ENCODE measurements at regions of chr12 and their contacts with region 1.

Region 1: DNA sequence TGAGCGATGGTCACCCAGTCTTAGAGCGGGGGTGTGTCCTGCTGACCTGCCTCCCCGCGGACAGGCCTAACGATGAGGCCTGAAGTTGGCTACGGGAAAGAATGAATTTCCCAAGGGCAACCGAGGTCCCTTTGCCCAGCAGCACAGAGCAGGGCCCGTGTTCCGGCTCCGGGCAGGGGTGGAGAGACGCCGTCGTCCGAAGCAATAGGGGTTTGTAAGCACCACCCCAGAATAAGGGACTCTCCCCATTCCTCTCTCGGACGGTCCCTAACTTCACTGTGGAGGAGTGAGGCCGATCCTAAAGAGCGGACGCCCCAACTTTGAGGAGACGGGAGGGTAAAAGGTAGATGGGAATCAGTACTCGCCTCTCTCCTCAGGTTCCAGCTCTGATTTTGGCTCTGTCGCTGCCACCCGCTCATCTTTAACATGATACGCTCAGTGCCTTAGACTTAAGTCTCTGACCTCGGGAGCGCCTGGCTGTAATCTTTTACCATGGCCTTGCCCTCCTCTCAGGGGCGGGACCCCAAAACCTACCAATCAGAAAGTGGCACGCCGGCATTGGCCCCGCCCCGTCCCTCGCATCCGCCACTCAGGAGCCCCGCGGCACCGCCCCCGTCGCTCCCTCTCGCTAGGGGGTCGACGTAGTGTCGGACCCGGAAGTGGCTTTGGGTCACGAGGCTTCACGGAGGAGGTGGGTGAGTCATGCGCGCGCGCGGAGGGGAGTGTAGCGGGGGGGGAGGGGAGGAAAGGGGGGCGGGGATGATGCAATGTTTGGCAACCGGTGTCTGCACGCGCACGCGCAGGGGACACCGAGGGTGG is at the start of gene DDIT3:
- DNase-seq: peak; percentile 99
- H3K4me3 Mint-ChIP-seq: peak within 1 kb of the TSS; percentile 91
- H3K27ac Mint-ChIP-seq: peak within 1 kb of the TSS; percentile 100
- H3K4me1 Mint-ChIP-seq: peaks cover 42% of the 10 kb centered on the region
- H3K27me3 Mint-ChIP-seq: no peaks in the 10 kb centered on the region
- total RNA-seq, gene DDIT3: 10.9 and 11.4 TPM in 2 replicates

Region 2: GRCh38 chr12:57088459-57089248 is 431.6 kb before region 1 on chr12 and contains the start of gene NAB2:
- intact Hi-C with region 1: loop called (anchors 5 kb)
- DNase-seq: peak; percentile 91
- H3K4me3 Mint-ChIP-seq: peak within 1 kb of the TSS; percentile 99
- H3K27ac Mint-ChIP-seq: peak within 1 kb of the TSS; percentile 98
- H3K4me1 Mint-ChIP-seq: peaks cover 62% of the 10 kb centered on the region
- H3K27me3 Mint-ChIP-seq: no peaks in the 10 kb centered on the region
- total RNA-seq, gene NAB2: 72.8 and 74.7 TPM in 2 replicates

Region 3: GRCh38 chr12:57452937-57453509 is 67.2 kb before region 1 on chr12:
- intact Hi-C with region 1: no loop called
- DNase-seq: peak; percentile 44
- H3K4me3 Mint-ChIP-seq: no peak overlapping the region
- H3K27ac Mint-ChIP-seq: peak overlapping the region; percentile 67
- H3K4me1 Mint-ChIP-seq: peaks cover 30% of the 10 kb centered on the region
- H3K27me3 Mint-ChIP-seq: no peaks in the 10 kb centered on the region

Region 4: GRCh38 chr12:57476162-57476992 is 43.9 kb before region 1 on chr12:
- intact Hi-C with region 1: loop called (anchors 1 kb)
- DNase-seq: peak; percentile 72
- H3K4me3 Mint-ChIP-seq: peak overlapping the region; percentile 93
- H3K27ac Mint-ChIP-seq: peak overlapping the region; percentile 100
- H3K4me1 Mint-ChIP-seq: peaks cover 47% of the 10 kb centered on the region
- H3K27me3 Mint-ChIP-seq: no peaks in the 10 kb centered on the region

Region 5: GRCh38 chr12:57535764-57536596 is 15.7 kb after region 1 on chr12:
- intact Hi-C with region 1: no loop called
- DNase-seq: no peak
- H3K4me3 Mint-ChIP-seq: no peak overlapping the region
- H3K27ac Mint-ChIP-seq: no peak overlapping the region
- H3K4me1 Mint-ChIP-seq: peaks cover 3% of the 10 kb centered on the region
- H3K27me3 Mint-ChIP-seq: no peaks in the 10 kb centered on the region

Region 6: DNA sequence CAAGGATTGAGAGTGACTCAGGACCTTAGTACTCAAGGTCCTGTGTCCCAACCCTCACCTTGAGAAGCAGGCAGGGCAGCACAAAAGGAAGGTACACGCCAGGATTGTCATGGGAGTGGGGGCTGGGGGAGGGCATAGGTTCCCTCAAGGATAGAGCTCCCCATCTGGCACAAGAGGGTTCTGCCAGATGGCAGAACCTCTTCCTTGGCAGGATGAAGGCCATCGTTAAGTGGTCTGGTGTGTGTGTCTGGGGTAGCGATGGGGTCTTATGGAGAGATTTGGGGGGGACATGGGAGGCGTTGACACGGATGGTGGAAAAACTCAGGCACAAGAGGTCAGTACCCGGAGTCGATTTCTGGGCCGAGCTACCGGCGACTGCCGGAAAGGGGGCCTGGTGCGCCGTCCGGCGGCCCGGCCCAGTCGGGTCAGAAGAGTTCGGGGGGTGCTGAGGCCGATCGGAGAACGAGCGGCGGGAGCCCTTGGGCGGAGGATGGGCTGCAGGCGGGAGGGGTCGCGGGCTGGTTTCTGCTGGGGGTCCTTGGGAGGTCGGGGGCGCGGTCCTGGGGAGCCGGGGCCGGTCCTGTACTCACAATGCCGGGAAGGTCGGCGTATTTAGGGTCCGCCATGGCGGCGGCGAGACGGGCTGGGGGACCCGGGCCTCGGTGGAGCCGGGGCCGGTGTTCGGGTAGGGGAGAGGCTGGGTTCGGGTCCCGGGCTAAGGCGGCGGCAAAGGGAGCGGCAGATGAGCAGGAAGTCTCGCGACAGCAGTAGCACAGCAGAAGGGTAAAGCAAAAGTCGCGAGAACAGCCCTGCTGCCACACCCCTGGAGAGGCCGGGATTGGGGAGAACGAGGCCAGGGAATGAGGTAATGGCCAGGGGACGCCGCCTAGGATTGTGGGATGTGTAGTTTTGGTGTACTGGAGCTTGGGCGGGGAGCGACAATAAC is 26.4 kb after region 1 on chr12 and contains the start of gene DCTN2:
- intact Hi-C with region 1: loop called (anchors 1 kb)
- DNase-seq: peak; percentile 94
- H3K4me3 Mint-ChIP-seq: peak within 1 kb of the TSS; percentile 98
- H3K27ac Mint-ChIP-seq: peak within 1 kb of the TSS; percentile 95
- H3K4me1 Mint-ChIP-seq: peaks cover 49% of the 10 kb centered on the region
- H3K27me3 Mint-ChIP-seq: peaks cover 12% of the 10 kb centered on the region
- total RNA-seq, gene DCTN2: 96.7 and 101 TPM in 2 replicates

Region 7: GRCh38 chr12:57751788-57752667 is 231.8 kb after region 1 on chr12 and contains the start of gene CDK4:
- intact Hi-C with region 1: loop called (anchors 1 kb)
- DNase-seq: peak; percentile 99
- H3K4me3 Mint-ChIP-seq: peak within 1 kb of the TSS; percentile 94
- H3K27ac Mint-ChIP-seq: peak within 1 kb of the TSS; percentile 92
- H3K4me1 Mint-ChIP-seq: peaks cover 50% of the 10 kb centered on the region
- H3K27me3 Mint-ChIP-seq: peaks cover 2% of the 10 kb centered on the region
- total RNA-seq, gene CDK4: 180 and 201 TPM in 2 replicates